Activated CD8-positive, alpha-beta T cell treated with anti-CD3 and anti-CD28 coated beads for 36 hours (primary cell): ENCODE measurements at regions of chr10 and their contacts with region 1.

Region 1: DNA sequence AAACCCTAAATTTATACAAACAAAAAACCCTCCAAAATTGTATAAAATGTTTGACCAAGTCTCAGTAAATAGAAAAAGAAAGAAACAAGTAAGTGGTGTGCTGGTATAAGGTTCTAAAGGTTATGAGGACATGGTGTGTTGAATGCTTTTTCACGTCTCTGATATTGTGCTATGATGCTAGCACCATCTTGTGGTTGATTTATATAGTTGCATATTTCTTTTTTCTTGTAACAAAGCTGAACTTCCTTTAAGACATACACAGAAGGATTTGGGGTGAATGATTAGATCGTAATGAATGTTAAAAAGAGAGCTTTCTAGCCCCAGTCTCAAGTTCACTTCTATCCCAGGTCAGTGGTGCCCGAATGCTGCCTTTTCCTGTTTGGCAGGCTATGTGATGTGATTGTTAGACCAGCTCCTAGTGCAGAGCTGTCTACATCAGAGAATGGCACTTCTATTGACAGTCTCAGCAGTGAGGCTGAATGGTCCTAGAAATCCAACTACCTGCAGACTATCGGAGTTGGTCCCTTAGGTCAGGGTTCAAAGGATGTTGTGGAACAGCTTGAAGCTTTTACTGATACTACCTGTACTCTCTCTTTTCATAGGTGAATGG is 25.0 kb downstream of the VTI1A start:
- DNase-seq: no peak
- ATAC-seq: peak; percentile 78
- H3K4me3 Mint-ChIP-seq: no peak overlapping the region
- H3K27ac Mint-ChIP-seq: peak overlapping the region; percentile 64
- H3K4me1 Mint-ChIP-seq: peaks cover 14% of the 10 kb centered on the region
- H3K27me3 Mint-ChIP-seq: no peaks in the 10 kb centered on the region
- CTCF ChIP-seq: peak; percentile 82

Region 2: GRCh38 chr10:112314822-112315474 is 157.0 kb before region 1 on chr10:
- CTCF ChIA-PET with region 1: interaction called, 25 read pairs
- POLR2A ChIA-PET with region 1: no interaction called
- intact Hi-C with region 1: no loop called
- DNase-seq: peak; percentile 88
- ATAC-seq: peak; percentile 87
- H3K4me3 Mint-ChIP-seq: no peak overlapping the region
- H3K27ac Mint-ChIP-seq: no peak overlapping the region
- H3K4me1 Mint-ChIP-seq: no peaks in the 10 kb centered on the region
- H3K27me3 Mint-ChIP-seq: peaks cover 19% of the 10 kb centered on the region
- CTCF ChIP-seq: peak; percentile 91

Region 3: GRCh38 chr10:112442063-112442462 is 29.9 kb before region 1 on chr10:
- CTCF ChIA-PET with region 1: interaction called, 16 read pairs
- POLR2A ChIA-PET with region 1: no interaction called
- intact Hi-C with region 1: no loop called
- DNase-seq: no peak
- ATAC-seq: no peak
- H3K4me3 Mint-ChIP-seq: no peak overlapping the region
- H3K27ac Mint-ChIP-seq: peak overlapping the region; percentile 70
- H3K4me1 Mint-ChIP-seq: peaks cover 34% of the 10 kb centered on the region
- H3K27me3 Mint-ChIP-seq: no peaks in the 10 kb centered on the region
- CTCF ChIP-seq: no peak

Region 4: GRCh38 chr10:112461029-112461887 is 10.7 kb before region 1 on chr10:
- CTCF ChIA-PET with region 1: interaction called, 31 read pairs
- POLR2A ChIA-PET with region 1: no interaction called
- intact Hi-C with region 1: no loop called
- DNase-seq: peak; percentile 80
- ATAC-seq: peak; percentile 83
- H3K4me3 Mint-ChIP-seq: no peak overlapping the region
- H3K27ac Mint-ChIP-seq: peak overlapping the region; percentile 96
- H3K4me1 Mint-ChIP-seq: peaks cover 37% of the 10 kb centered on the region
- H3K27me3 Mint-ChIP-seq: no peaks in the 10 kb centered on the region
- CTCF ChIP-seq: no peak

Region 5: GRCh38 chr10:112497347-112497950 is 25.5 kb after region 1 on chr10:
- CTCF ChIA-PET with region 1: interaction called, 11 read pairs
- POLR2A ChIA-PET with region 1: no interaction called
- intact Hi-C with region 1: no loop called
- DNase-seq: no peak
- ATAC-seq: no peak
- H3K4me3 Mint-ChIP-seq: no peak overlapping the region
- H3K27ac Mint-ChIP-seq: no peak overlapping the region
- H3K4me1 Mint-ChIP-seq: peaks cover 6% of the 10 kb centered on the region
- H3K27me3 Mint-ChIP-seq: no peaks in the 10 kb centered on the region
- CTCF ChIP-seq: no peak

Region 6: DNA sequence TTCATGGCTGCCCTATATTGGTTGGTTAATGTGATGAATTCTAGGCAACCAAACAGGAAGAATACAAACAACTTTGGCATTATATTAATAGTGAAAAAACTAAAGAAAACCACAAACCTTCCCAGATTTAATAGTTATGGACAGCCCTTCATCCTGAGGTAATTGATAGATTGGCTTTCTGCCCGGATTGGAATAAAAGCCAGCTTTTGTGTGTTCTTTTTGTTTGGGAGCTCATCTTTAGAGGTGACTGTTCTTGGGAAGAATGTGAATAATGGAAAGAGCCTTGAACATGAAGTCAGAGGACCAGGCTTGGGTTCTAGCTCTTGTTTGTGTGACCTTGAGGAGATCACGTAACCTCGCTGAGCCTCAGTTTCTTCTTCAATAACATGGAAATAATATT is 67.4 kb after region 1 on chr10:
- CTCF ChIA-PET with region 1: no interaction called
- POLR2A ChIA-PET with region 1: no interaction called
- intact Hi-C with region 1: no loop called
- DNase-seq: no peak
- ATAC-seq: no peak
- H3K4me3 Mint-ChIP-seq: no peak overlapping the region
- H3K27ac Mint-ChIP-seq: no peak overlapping the region
- H3K4me1 Mint-ChIP-seq: peaks cover 4% of the 10 kb centered on the region
- H3K27me3 Mint-ChIP-seq: no peaks in the 10 kb centered on the region
- CTCF ChIP-seq: no peak

Region 7: DNA sequence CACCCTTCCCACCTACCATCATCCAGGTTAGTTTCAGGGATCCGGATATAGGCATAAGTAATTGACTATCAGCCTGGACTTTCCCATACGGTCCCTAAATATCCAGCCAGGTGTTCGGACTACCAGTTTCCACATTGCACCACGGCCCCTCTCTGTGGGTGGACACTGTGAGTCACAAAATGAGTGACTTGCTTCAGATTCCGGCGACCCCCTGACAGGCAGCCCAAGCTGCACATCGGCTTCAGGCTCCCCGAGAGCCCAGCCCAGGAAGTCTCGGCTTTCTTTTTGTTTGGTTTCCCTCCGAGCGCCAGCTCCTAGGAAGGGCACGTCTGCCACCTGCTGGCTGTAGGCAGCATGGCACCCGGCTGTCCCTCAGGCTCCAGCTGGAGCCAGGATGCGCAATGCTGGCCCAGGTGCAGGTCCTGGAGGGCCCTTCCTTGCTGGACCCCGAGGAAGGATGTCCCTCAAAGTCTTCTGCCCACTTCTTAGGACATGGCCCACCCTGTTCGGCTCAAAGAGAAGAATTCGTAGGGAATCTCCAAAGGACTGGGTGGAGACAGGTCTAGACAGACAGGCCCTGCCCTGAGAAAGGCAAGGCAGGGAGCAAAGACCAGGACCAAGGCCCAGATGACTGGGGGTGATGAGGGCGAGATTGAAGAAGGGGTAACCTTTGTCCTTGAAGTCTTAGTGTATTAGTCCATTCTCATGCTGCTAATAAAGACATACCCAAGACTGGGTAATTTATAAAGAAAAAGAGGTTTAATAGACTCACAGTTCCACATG is 1091.5 kb after region 1 on chr10:
- CTCF ChIA-PET with region 1: interaction called, 5 read pairs
- POLR2A ChIA-PET with region 1: no interaction called
- intact Hi-C with region 1: loop called (anchors 10 kb)
- DNase-seq: peak; percentile 82
- ATAC-seq: peak; percentile 99
- H3K4me3 Mint-ChIP-seq: peak overlapping the region; percentile 58
- H3K27ac Mint-ChIP-seq: no peak overlapping the region
- H3K4me1 Mint-ChIP-seq: no peaks in the 10 kb centered on the region
- H3K27me3 Mint-ChIP-seq: peaks cover under 1% of the 10 kb centered on the region
- CTCF ChIP-seq: peak; percentile 97